CD8-positive, alpha-beta T cell (primary cell): ENCODE measurements at regions of chr11 and their contacts with region 1.

Region 1: GRCh38 chr11:93784152-93784934 is at the start of gene MED17:
- DNase-seq: peak; percentile 68 to 94 (median 89)
- ATAC-seq: peak; percentile 94
- H3K4me3 ChIP-seq: peak within 1 kb of the TSS; percentile 99 to 100
- H3K4me3 Mint-ChIP-seq: peak within 1 kb of the TSS; percentile 96
- H3K27ac ChIP-seq: peak within 1 kb of the TSS; percentile 94 to 96
- H3K27ac Mint-ChIP-seq: peak within 1 kb of the TSS; percentile 94
- H3K4me1 ChIP-seq: peaks cover 28% of the 10 kb centered on the region
- H3K4me1 Mint-ChIP-seq: peaks cover 40% of the 10 kb centered on the region
- H3K27me3 ChIP-seq: no peaks in the 10 kb centered on the region
- H3K27me3 Mint-ChIP-seq: no peaks in the 10 kb centered on the region
- CTCF ChIP-seq: peak; percentile 52
- total RNA-seq, gene MED17: 63.7 to 65.9 TPM

Region 2: DNA sequence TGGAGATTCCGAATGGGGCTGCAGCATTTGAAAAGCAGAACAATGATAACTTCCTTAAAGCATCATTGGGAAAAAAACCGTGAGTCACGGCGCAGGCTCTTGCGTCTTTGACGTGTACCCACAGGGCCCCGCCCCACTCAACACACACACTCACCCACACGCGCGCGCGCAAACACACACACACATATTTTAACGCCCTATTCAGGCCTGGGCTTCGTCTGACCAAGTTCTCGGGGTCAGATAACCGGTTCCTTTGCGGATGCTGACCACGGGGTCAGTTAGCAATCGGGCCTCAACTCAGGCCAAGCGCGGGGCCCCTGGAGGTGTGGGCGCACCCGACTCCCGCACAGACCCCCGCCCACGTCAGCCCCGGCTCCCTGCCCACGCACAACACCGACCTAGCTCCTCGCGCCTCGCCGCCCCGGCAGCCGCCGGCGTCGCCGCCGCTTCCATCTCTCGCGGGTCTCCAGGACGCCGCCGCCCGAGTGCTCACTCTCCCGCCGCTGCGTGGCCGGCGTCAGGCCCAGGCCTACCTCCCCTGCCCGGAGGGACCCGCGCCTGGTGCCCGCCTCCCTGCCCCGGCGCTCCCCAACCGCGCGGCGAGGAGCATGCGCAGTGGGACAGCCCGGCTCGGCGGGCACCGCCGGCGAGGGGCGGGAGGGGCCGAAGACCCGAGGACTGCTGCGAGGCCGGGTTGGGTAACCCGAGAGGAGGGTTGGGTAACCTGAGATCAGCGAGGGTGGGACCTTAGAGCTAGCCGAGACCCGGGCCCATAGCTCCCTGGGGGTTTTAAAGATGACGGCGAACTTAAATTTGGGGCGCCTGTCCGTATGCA is 586.7 kb before region 1 on chr11 and contains the start of gene SLC36A4:
- CTCF ChIA-PET with region 1: no interaction called
- POLR2A ChIA-PET with region 1: interaction called, 3 read pairs
- intact Hi-C with region 1: loop called in 1 of 2 experiments (anchors 5 kb)
- DNase-seq: peak; percentile 70 to 94 (median 86)
- ATAC-seq: peak; percentile 88
- H3K4me3 ChIP-seq: peak within 1 kb of the TSS; percentile 69 to 85
- H3K4me3 Mint-ChIP-seq: peak within 1 kb of the TSS; percentile 97
- H3K27ac ChIP-seq: peak within 1 kb of the TSS; percentile 72 to 93
- H3K27ac Mint-ChIP-seq: peak within 1 kb of the TSS; percentile 96
- H3K4me1 ChIP-seq: peaks cover 6% of the 10 kb centered on the region
- H3K4me1 Mint-ChIP-seq: peaks cover 31% of the 10 kb centered on the region
- H3K27me3 ChIP-seq: no peaks in the 10 kb centered on the region
- H3K27me3 Mint-ChIP-seq: no peaks in the 10 kb centered on the region
- CTCF ChIP-seq: no peak
- total RNA-seq, gene SLC36A4: 16.8 to 17.6 TPM

Region 3: GRCh38 chr11:93662177-93662575 is 122.2 kb before region 1 on chr11:
- CTCF ChIA-PET with region 1: no interaction called
- POLR2A ChIA-PET with region 1: no interaction called
- intact Hi-C with region 1: loop called (anchors 1 to 5 kb)
- DNase-seq: no peak
- ATAC-seq: no peak
- H3K4me3 ChIP-seq: peak overlapping the region; percentile 73 to 99
- H3K4me3 Mint-ChIP-seq: peak overlapping the region; percentile 86
- H3K27ac ChIP-seq: peak overlapping the region; percentile 75 to 97
- H3K27ac Mint-ChIP-seq: peak overlapping the region; percentile 90
- H3K4me1 ChIP-seq: peaks cover 6% of the 10 kb centered on the region
- H3K4me1 Mint-ChIP-seq: peaks cover 38% of the 10 kb centered on the region
- H3K27me3 ChIP-seq: no peaks in the 10 kb centered on the region
- H3K27me3 Mint-ChIP-seq: no peaks in the 10 kb centered on the region
- CTCF ChIP-seq: no peak

Region 4: DNA sequence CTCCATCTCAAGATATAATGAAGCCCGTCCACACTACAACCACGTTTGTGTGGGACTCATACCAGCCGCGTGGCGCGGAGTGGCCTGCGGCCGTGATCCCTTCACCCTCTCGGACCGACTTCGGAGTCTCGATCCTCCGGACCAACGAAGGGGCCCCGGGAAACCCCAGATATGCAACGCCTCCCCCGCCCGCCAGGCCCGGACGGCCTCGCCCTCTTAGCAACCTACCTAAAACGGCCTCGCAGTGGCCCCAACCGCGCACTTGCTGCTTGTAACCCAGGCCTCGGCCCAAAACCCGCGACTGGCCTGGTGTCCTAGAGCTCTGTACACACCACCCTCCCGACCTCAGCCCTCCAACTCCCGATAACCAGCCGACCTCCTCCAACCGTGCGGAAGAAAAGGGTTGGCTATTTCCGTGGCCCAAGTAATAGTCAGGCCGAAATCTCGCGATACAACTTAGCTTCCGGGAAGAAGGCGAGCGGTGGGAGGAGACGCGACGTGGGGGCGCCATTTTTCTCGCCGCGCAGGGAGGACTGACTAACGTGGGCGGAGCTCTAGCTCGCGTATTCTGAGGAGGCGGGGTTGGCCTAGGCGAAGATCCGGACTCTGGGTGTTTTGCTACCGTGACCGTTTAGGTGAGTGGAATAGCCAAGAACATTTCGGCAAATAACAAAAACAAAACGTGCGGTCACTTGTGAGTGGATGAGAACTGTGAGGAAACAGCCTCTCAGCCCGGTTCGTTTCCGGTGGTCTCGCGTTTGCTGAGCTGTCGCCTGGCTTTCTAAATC is 43.1 kb before region 1 on chr11 and contains the starts of genes C11orf54 and TAF1D:
- CTCF ChIA-PET with region 1: interaction called, 10 read pairs
- POLR2A ChIA-PET with region 1: interaction called, 78 read pairs
- intact Hi-C with region 1: loop called (anchors 1 kb)
- DNase-seq: peak; percentile 92 to 99 (median 96)
- ATAC-seq: peak; percentile 91
- H3K4me3 ChIP-seq: peak within 1 kb of the TSS; percentile 81 to 99
- H3K4me3 Mint-ChIP-seq: peak within 1 kb of the TSS; percentile 100
- H3K27ac ChIP-seq: peak within 1 kb of the TSS; percentile 89 to 95
- H3K27ac Mint-ChIP-seq: peak within 1 kb of the TSS; percentile 100
- H3K4me1 ChIP-seq: peaks cover 46% of the 10 kb centered on the region
- H3K4me1 Mint-ChIP-seq: peaks cover 69% of the 10 kb centered on the region
- H3K27me3 ChIP-seq: no peaks in the 10 kb centered on the region
- H3K27me3 Mint-ChIP-seq: no peaks in the 10 kb centered on the region
- CTCF ChIP-seq: no peak
- total RNA-seq, gene C11orf54: 7.7 to 9.4 TPM
- total RNA-seq, gene TAF1D: 167 to 190 TPM

Region 5: GRCh38 chr11:93796441-93797231 is 12.3 kb after region 1 on chr11:
- CTCF ChIA-PET with region 1: interaction called, 3 read pairs
- POLR2A ChIA-PET with region 1: interaction called, 3 read pairs
- intact Hi-C with region 1: loop called in 1 of 2 experiments (anchors 1 kb)
- DNase-seq: no peak
- ATAC-seq: no peak
- H3K4me3 ChIP-seq: no peak overlapping the region
- H3K4me3 Mint-ChIP-seq: no peak overlapping the region
- H3K27ac ChIP-seq: no peak overlapping the region
- H3K27ac Mint-ChIP-seq: no peak overlapping the region
- H3K4me1 ChIP-seq: no peaks in the 10 kb centered on the region
- H3K4me1 Mint-ChIP-seq: peaks cover 10% of the 10 kb centered on the region
- H3K27me3 ChIP-seq: no peaks in the 10 kb centered on the region
- H3K27me3 Mint-ChIP-seq: no peaks in the 10 kb centered on the region
- CTCF ChIP-seq: no peak

Region 6: GRCh38 chr11:94128746-94129511 is 344.6 kb after region 1 on chr11 and contains the start of gene PANX1:
- CTCF ChIA-PET with region 1: no interaction called
- POLR2A ChIA-PET with region 1: interaction called, 6 read pairs
- intact Hi-C with region 1: loop called in 1 of 2 experiments (anchors 5 kb)
- DNase-seq: peak; percentile 41 to 94 (median 75)
- ATAC-seq: peak; percentile 83
- H3K4me3 ChIP-seq: peak within 1 kb of the TSS; percentile 91 to 95
- H3K4me3 Mint-ChIP-seq: no peak within 1 kb of the TSS
- H3K27ac ChIP-seq: peak within 1 kb of the TSS; percentile 85 to 95
- H3K27ac Mint-ChIP-seq: peak within 1 kb of the TSS; percentile 92
- H3K4me1 ChIP-seq: peaks cover 34% of the 10 kb centered on the region
- H3K4me1 Mint-ChIP-seq: peaks cover 26% of the 10 kb centered on the region
- H3K27me3 ChIP-seq: no peaks in the 10 kb centered on the region
- H3K27me3 Mint-ChIP-seq: no peaks in the 10 kb centered on the region
- CTCF ChIP-seq: no peak
- total RNA-seq, gene PANX1: 8.3 to 9.3 TPM

Region 7: DNA sequence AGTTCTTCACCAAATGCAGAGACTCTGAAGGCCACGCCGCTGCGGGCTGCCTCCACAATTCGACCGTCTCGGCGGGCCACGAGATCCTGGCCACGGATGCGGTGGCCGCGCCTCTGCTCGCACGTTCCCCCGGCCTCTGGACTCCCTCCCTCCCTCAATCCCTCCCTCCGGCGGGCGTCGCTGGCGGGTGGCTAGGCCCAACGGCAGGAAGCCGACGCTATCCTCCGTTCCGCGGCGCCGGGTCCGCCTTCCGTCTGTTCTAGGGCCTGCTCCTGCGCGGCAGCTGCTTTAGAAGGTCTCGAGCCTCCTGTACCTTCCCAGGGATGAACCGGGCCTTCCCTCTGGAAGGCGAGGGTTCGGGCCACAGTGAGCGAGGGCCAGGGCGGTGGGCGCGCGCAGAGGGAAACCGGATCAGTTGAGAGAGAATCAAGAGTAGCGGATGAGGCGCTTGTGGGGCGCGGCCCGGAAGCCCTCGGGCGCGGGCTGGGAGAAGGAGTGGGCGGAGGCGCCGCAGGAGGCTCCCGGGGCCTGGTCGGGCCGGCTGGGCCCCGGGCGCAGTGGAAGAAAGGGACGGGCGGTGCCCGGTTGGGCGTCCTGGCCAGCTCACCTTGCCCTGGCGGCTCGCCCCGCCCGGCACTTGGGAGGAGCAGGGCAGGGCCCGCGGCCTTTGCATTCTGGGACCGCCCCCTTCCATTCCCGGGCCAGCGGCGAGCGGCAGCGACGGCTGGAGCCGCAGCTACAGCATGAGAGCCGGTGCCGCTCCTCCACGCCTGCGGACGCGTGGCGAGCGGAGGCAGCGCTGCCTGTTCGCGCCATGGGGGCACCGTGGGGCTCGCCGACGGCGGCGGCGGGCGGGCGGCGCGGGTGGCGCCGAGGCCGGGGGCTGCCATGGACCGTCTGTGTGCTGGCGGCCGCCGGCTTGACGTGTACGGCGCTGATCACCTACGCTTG is 759.6 kb after region 1 on chr11 and contains the start of gene FUT4:
- CTCF ChIA-PET with region 1: no interaction called
- POLR2A ChIA-PET with region 1: interaction called, 3 read pairs
- intact Hi-C with region 1: loop called in 1 of 2 experiments (anchors 1 kb)
- DNase-seq: peak; percentile 26 to 82 (median 69)
- ATAC-seq: peak; percentile 76
- H3K4me3 ChIP-seq: peak within 1 kb of the TSS; percentile 65 to 77
- H3K4me3 Mint-ChIP-seq: peak within 1 kb of the TSS; percentile 99
- H3K27ac ChIP-seq: peak within 1 kb of the TSS; percentile 87 to 90
- H3K27ac Mint-ChIP-seq: peak within 1 kb of the TSS; percentile 100
- H3K4me1 ChIP-seq: peaks cover 22% of the 10 kb centered on the region
- H3K4me1 Mint-ChIP-seq: peaks cover 39% of the 10 kb centered on the region
- H3K27me3 ChIP-seq: no peaks in the 10 kb centered on the region
- H3K27me3 Mint-ChIP-seq: no peaks in the 10 kb centered on the region
- CTCF ChIP-seq: no peak
- total RNA-seq, gene FUT4: 4.7 to 5.2 TPM